Activated CD4-positive, alpha-beta memory T cell treated with anti-CD3 and anti-CD28 coated beads, Interleukin-2, amount 10 ng/mL, durations not matched to agents 7 days and 5 days (primary cell): ENCODE measurements at regions of chr11 and their contacts with region 1.

Region 1: DNA sequence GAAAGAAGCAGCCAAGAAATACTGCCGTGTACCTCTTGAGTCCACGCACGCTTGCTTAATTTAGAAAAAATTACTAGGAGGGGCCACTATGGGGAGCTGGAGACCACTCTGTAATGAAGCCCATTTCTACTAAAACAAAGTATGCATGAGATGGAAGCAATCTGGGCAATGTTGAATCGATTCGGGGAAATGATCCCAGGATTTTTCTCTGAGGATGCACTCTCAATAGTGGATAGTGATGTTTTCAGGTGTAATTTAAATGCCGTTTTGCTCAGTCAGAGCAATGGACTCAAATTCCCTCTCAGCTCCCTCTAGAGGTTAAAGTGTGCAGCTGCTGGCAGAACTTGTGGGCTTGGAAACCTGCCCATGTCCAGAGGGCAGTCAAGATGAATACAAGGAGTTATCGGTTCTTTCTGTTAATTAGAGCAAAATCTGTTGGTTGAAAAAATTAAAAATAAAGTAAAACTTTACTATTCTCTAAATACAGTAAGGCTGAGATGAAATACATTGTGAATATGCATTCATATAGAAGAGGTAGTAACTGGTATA is 64.1 kb downstream of the ME3 start:
- DNase-seq: peak; percentile 43
- H3K4me3 Mint-ChIP-seq: no peak overlapping the region
- H3K27ac Mint-ChIP-seq: no peak overlapping the region
- H3K4me1 Mint-ChIP-seq: no peaks in the 10 kb centered on the region
- H3K27me3 Mint-ChIP-seq: peaks cover 17% of the 10 kb centered on the region

Region 2: GRCh38 chr11:86456052-86456939 is 152.0 kb before region 1 on chr11:
- CTCF ChIA-PET with region 1: interaction called, 37 read pairs
- POLR2A ChIA-PET with region 1: no interaction called
- DNase-seq: peak; percentile 79
- H3K4me3 Mint-ChIP-seq: no peak overlapping the region
- H3K27ac Mint-ChIP-seq: no peak overlapping the region
- H3K4me1 Mint-ChIP-seq: no peaks in the 10 kb centered on the region
- H3K27me3 Mint-ChIP-seq: no peaks in the 10 kb centered on the region

Region 3: DNA sequence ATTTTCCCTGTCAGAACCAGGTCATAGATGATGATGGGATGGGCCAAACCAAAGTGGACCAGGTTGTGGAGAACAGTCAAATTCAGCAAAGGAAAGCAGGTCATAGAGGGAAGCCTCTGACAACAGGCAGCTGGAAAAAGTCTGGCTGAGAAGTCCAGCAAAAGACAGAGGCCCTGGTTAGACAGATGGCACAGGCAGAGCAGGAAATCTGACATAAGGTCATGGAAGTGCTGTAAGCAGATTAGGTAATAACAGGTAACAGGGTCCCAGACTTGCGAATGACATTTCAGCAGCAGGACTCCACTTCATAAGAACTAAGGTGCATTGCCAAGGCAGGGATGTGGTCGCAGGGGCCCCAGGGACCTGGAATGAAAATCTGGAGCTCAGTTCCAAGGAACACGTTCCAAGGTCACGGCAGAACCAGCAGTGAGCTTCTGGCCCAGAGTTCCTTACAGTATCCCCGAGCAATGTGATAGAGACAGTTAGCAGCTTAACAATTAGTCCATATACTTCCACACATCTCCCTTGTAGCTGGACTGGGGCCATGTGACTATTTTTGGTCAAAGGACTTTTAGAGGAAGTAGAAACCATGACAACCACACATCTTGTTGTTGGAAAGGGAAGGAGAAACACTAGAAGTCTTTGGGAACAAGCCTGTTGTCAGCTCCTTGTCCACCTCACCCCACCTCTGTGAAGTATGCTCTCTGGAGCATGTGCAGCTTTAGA is 11.3 kb before region 1 on chr11:
- CTCF ChIA-PET with region 1: interaction called, 10 read pairs
- POLR2A ChIA-PET with region 1: no interaction called
- DNase-seq: no peak
- H3K4me3 Mint-ChIP-seq: no peak overlapping the region
- H3K27ac Mint-ChIP-seq: no peak overlapping the region
- H3K4me1 Mint-ChIP-seq: peaks cover 14% of the 10 kb centered on the region
- H3K27me3 Mint-ChIP-seq: peaks cover 5% of the 10 kb centered on the region

Region 4: DNA sequence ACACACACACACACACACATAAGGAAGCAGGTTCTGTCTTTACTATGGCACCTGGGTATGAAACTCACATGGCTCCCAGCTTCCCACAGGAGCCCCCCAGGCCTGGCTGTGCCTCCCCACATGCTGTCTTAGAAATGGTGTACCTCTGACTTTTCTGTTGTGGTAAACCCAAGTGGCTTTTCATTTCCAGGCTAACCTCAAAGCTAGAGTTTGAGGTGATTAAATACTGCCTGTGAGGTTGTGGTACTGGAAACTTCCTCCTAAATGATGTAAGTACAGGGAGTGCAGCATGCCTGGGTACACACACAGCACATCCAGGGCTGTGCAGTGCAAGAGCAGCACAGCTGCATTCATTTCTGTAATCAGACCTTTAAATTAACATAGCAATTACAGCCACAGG is 29.7 kb after region 1 on chr11:
- CTCF ChIA-PET with region 1: interaction called, 14 read pairs
- POLR2A ChIA-PET with region 1: no interaction called
- DNase-seq: peak; percentile 22
- H3K4me3 Mint-ChIP-seq: no peak overlapping the region
- H3K27ac Mint-ChIP-seq: no peak overlapping the region
- H3K4me1 Mint-ChIP-seq: peaks cover 24% of the 10 kb centered on the region
- H3K27me3 Mint-ChIP-seq: peaks cover 49% of the 10 kb centered on the region